Endothelial cell of umbilical vein (primary cell): ENCODE measurements at regions of chr12 and their contacts with region 1.

Region 1: DNA sequence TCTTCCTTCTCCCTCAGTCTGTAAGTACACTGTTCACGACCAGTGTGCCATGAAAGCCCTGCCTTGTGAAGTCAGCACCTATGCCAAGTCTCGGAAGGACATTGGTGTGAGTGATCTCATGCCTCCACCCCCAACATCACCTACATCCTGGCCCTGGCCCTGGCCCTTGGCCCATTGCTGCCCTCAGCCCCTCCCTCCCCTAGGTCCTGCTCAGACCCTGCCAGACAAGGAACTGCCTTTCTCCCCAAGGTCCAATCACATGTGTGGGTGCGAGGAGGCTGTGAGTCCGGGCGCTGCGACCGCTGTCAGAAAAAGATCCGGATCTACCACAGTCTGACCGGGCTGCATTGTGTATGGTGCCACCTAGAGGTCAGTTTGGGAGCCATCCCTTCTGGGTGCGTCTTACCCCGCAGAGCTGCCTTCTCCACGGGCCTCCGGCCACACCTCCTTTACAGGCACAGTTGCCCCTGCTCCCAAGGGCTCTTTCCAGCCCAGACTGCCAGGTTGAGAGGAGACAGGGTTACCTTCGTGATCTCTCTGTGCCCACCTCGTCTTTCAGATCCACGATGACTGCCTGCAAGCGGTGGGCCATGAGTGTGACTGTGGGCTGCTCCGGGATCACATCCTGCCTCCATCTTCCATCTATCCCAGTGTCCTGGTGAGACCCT is 9.2 kb downstream of the DGKA start:
- DNase-seq: peak; percentile 85
- H3K4me3 ChIP-seq: no peak overlapping the region
- H3K27ac ChIP-seq: no peak overlapping the region
- H3K4me1 ChIP-seq: no peaks in the 10 kb centered on the region
- H3K27me3 ChIP-seq: no peaks in the 10 kb centered on the region
- CTCF ChIP-seq: peak; percentile 89 to 98
- POLR2A ChIP-seq: no peak

Region 2: DNA sequence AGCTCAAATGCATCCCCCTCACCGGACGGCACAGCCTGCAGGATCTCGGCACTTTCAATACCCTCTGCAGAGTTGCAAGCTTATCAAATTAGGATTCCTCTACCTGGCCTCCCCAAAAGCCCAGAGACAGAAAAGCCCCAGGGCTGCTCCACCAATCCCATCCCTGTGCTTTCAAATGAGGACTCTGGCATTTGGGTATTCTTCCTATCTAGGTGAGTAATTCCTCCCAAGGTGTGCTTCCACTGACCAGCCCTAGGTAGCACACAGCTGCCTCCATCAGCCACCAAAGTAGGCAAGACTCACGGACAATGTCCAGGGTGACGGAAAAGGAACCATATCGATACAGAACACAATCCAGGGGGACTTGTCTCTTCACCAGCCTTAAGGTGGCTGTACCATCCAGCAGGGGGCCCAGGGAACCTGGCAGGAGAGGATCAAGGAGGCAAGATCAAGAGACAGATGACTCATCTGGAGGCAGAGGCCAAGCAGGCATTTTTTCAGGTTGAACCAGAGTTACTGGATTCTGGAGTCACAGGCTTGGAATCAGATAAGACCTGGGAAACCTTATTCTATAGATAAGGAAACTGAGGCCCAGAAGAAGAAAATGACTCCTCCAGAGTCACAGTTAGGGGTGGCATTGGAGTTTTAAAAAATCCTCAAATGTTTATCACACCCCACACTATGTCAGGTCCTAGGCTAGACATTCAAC is 15.8 kb after region 1 on chr12:
- CTCF ChIA-PET with region 1: interaction called, 7 read pairs
- POLR2A ChIA-PET with region 1: no interaction called
- dilution Hi-C with region 1: no loop called
- intact Hi-C with region 1: loop called (anchors 2 kb)
- DNase-seq: peak; percentile 40
- H3K4me3 ChIP-seq: no peak overlapping the region
- H3K27ac ChIP-seq: no peak overlapping the region
- H3K4me1 ChIP-seq: no peaks in the 10 kb centered on the region
- H3K27me3 ChIP-seq: no peaks in the 10 kb centered on the region
- CTCF ChIP-seq: peak; percentile 34 to 37
- POLR2A ChIP-seq: no peak